Transverse colon (tissue), 4 donors: ENCODE measurements at regions of chr11 and their contacts with region 1.

Region 1: DNA sequence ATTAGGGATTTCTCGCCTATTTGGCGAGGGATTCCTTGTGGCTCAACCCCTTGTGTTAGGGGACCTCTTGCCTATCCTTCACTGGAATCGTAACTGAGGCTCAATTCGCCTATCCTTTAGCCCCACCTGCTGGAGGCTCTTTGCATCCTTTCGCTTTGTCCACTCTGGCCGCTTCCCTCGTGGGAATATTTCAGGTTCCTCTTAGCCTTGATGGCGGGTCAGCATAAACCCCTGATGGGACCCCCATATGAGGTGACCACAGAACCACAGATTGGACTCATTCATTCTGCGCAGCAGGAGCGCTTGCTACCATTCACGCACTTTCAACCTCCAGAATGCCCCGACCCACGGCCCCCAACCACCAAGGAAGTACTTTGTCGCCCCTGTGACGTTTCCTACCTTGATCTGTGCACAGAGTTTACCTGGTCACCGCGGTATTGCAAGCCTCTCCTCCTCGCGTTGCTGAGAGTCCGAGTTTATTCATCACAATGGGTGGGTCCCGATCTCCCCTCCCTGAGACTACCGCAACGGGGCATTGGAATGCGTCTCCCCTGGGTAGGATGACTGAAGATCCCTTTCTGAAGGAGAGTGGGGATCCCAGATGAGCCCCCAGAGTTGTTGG is at the start of gene OR52N2:
- DNase-seq: peak; percentile 73
- H3K4me3 ChIP-seq: peak within 1 kb of the TSS; percentile 15 to 49 (median 30)
- H3K27ac ChIP-seq: no peak within 1 kb of the TSS
- H3K4me1 ChIP-seq: peaks cover 0 to 11% (median 0%) of the 10 kb centered on the region in 4 donors
- H3K27me3 ChIP-seq: no peaks in the 10 kb centered on the region
- CTCF ChIP-seq: peak; percentile 68 to 75 (median 75)
- EP300 ChIP-seq: no peak
- POLR2A ChIP-seq: no peak
- total RNA-seq, gene OR52N2: not detected

Region 2: DNA sequence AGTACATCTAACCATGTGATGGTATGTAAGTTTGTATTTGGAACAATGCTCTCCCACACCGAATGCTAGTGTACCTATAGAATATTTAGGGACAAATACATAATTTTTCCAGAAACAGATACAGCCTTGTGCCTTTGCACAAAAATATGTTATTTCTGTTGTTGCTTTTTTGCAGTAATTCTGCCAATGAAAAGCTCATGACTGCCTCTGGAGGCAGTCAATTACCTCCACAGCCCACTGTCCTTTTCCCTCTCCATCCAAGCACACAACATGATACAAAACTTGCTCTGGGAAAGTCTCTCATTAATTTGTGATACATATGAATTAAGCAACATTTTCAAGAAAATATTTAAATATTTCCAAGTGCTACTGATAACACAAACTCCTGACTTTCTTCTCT is 355.9 kb before region 1 on chr11:
- in situ Hi-C with region 1: loop called in 1 of 4 experiments (anchors 25 kb)
- intact Hi-C with region 1: no loop called
- DNase-seq: no peak
- H3K4me3 ChIP-seq: no peak overlapping the region
- H3K27ac ChIP-seq: no peak overlapping the region
- H3K4me1 ChIP-seq: no peaks in the 10 kb centered on the region
- H3K27me3 ChIP-seq: no peaks in the 10 kb centered on the region
- CTCF ChIP-seq: no peak
- EP300 ChIP-seq: no peak
- POLR2A ChIP-seq: no peak

Region 3: DNA sequence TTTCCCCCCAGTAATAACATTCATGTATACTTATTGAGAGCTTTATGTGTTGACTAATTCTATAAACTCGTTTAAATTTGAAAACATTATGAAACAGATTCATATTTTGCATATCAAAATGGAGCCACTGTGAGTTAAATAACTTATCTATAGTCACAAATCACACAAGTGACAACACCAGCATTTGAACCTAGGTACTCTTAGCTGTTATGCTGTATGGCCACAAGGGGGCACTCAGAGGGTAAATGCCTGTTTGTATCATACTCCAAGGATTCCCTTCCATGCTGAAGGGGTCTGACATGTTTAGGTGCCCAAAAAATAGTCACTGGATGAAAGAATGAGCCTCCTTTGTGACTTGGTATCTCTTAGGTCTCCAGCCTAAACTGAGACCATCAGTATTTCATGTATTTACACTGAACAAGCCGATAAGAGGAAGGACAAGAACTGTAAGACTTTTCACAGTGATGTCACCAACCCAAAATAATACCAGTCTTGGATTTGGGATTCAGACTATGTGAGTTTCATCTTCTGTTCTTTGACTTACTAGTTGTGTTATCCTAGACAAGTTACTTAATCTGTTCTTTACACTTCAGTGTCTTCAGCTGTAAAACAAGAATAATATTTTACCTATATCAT is 332.3 kb before region 1 on chr11:
- in situ Hi-C with region 1: loop called in 2 of 4 experiments (anchors 10 to 25 kb)
- intact Hi-C with region 1: no loop called
- DNase-seq: peak; percentile 25
- H3K4me3 ChIP-seq: no peak overlapping the region
- H3K27ac ChIP-seq: no peak overlapping the region
- H3K4me1 ChIP-seq: no peaks in the 10 kb centered on the region
- H3K27me3 ChIP-seq: no peaks in the 10 kb centered on the region
- CTCF ChIP-seq: peak; percentile 61 to 74 (median 64)
- EP300 ChIP-seq: no peak
- POLR2A ChIP-seq: no peak

Region 4: DNA sequence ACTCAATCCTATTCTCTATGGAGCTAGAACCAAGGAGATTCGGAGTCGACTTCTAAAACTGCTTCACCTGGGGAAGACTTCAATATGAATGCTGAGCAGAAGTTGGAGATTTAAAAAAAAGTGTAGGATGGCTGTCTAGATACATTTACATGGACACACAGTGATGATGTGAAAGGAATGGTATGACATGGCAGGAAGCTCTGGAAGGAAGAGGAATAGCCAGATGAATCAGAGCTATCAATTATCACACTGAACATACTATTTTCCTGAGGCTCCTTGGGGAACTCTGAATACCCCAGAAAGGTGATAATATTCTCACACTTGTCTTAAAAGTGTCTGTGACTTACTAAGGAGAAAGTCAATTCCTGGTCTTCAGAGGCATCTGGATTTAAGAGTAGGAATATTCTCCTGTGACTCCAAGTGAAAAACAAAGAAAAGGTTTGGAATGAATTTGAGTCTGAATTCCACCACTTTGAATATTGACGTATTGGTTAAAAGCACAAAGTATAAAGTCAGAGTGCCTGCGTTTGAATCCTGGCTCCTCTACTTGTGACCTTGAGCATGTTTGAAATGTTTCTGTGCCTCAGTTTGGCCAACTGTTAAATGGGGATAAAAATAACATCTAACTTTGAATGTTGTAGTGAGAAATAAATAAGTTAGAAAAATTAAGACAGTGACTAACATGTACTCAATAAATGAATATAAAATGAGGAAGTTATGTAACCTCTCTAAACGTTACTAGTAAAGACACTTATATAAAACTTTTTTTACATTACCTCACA is 318.8 kb before region 1 on chr11:
- in situ Hi-C with region 1: no loop called
- intact Hi-C with region 1: loop called (anchors 5 kb)
- DNase-seq: no peak
- H3K4me3 ChIP-seq: no peak overlapping the region
- H3K27ac ChIP-seq: no peak overlapping the region
- H3K4me1 ChIP-seq: no peaks in the 10 kb centered on the region
- H3K27me3 ChIP-seq: no peaks in the 10 kb centered on the region
- CTCF ChIP-seq: no peak
- EP300 ChIP-seq: no peak
- POLR2A ChIP-seq: no peak

Region 5: GRCh38 chr11:5600374-5600851 is 208.2 kb before region 1 on chr11:
- in situ Hi-C with region 1: loop called in 2 of 4 experiments (anchors 25 kb)
- intact Hi-C with region 1: no loop called
- DNase-seq: peak; percentile 73
- H3K4me3 ChIP-seq: no peak overlapping the region
- H3K27ac ChIP-seq: peak overlapping the region; percentile 44 to 65 (median 56)
- H3K4me1 ChIP-seq: peaks cover 0 to 18% (median 6%) of the 10 kb centered on the region in 4 donors
- H3K27me3 ChIP-seq: no peaks in the 10 kb centered on the region
- CTCF ChIP-seq: peak; percentile 66 to 82 (median 74)
- EP300 ChIP-seq: no peak
- POLR2A ChIP-seq: no peak

Region 6: DNA sequence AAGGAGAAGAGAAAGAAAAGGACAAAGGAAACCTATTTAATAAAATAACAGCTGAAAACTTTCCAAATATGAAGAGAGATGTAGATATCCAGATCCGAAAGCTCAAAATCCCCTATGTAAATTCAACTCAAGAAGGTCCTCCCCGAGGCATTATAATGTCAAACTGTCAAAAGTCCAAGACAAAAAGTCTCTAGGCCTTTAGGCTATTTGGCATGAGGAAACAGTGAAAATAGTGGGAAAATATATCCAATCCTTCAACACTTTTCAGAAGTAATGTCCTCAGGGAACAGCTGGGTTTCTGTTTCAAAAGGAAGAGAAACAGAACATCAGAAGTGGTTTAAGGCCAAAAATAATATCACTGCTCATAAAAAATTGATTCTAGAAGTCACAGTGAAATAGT is 70.0 kb after region 1 on chr11:
- in situ Hi-C with region 1: no loop called
- intact Hi-C with region 1: no loop called
- DNase-seq: no peak
- H3K4me3 ChIP-seq: no peak overlapping the region
- H3K27ac ChIP-seq: no peak overlapping the region
- H3K4me1 ChIP-seq: no peaks in the 10 kb centered on the region
- H3K27me3 ChIP-seq: no peaks in the 10 kb centered on the region
- CTCF ChIP-seq: no peak
- EP300 ChIP-seq: no peak
- POLR2A ChIP-seq: no peak